ENCODE measurements at regions of chr5 and their contacts with region 1.

Region 1: GRCh38 chr5:159377653-159378052 is 47.4 kb upstream of the IL12B start:
- DNase-seq: no peak
- H3K4me3 ChIP-seq: no peak overlapping the region
- H3K27ac ChIP-seq: no peak overlapping the region
- H3K4me1 ChIP-seq: no peaks in the 10 kb centered on the region
- H3K27me3 ChIP-seq: no peaks in the 10 kb centered on the region
- CTCF ChIP-seq: no peak

Region 2: GRCh38 chr5:159412284-159413046 is 34.8 kb after region 1 on chr5:
- CTCF ChIA-PET with region 1: no interaction called
- dilution Hi-C with region 1: loop called (anchors 5 kb)
- in situ Hi-C with region 1: no loop called
- intact Hi-C with region 1: no loop called
- DNase-seq: peak; percentile 9
- H3K4me3 ChIP-seq: no peak overlapping the region
- H3K27ac ChIP-seq: no peak overlapping the region
- H3K4me1 ChIP-seq: no peaks in the 10 kb centered on the region
- H3K27me3 ChIP-seq: no peaks in the 10 kb centered on the region
- CTCF ChIP-seq: no peak

Region 3: DNA sequence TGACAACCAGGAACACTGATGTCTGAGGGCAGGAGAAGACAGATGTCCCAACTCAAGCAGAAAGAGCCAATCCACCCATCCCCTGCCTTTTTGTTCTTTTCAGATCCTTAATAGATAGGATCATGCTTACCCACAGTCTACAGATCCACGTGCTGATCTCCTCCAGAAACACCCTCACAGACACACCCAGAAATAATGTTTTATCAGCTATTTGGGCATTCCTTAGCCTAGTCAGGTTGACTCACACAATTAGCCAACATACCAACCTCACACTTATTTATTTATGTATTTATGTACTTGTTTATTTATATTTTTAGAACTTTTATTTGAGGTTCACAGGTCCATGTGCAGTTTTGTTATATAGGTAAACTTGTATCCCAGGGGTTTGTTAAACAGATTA is 104.1 kb after region 1 on chr5:
- CTCF ChIA-PET with region 1: no interaction called
- dilution Hi-C with region 1: loop called (anchors 5 kb)
- in situ Hi-C with region 1: no loop called
- intact Hi-C with region 1: no loop called
- DNase-seq: no peak
- H3K4me3 ChIP-seq: no peak overlapping the region
- H3K27ac ChIP-seq: no peak overlapping the region
- H3K4me1 ChIP-seq: no peaks in the 10 kb centered on the region
- H3K27me3 ChIP-seq: no peaks in the 10 kb centered on the region
- CTCF ChIP-seq: no peak

Measured in mammary epithelial cell (primary cell).